GM10248 (cell line): ENCODE measurements at regions of chr19 and their contacts with region 1.

Region 1: DNA sequence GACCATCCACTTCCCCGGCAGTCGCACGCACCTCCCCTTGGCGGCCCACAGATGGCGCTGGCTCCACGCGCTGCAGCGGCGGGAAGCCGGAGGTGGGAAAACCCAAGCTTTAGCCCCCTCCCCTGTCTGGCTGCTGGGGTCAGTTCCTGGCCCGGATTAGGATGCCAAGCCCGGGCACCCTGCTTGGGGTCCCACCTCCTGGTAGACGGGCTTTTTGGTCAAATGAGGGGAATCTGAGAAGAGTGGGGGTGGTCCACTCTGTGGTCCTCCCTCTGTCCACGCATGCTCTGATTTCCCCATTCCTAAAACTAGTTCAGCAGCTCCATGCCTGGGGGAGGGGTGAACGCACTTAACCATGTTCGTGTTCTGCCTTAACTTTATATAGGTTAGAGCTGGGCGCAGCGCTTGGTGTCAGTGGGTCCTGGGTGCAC is 8.1 kb upstream of the ADGRE2 start:
- DNase-seq: peak; percentile 62
- CTCF ChIP-seq: peak; percentile 82

Region 2: GRCh38 chr19:14425696-14426138 is 360.7 kb before region 1 on chr19:
- CTCF ChIA-PET with region 1: no interaction called
- POLR2A ChIA-PET with region 1: no interaction called
- DNase-seq: no peak
- CTCF ChIP-seq: no peak

Region 3: DNA sequence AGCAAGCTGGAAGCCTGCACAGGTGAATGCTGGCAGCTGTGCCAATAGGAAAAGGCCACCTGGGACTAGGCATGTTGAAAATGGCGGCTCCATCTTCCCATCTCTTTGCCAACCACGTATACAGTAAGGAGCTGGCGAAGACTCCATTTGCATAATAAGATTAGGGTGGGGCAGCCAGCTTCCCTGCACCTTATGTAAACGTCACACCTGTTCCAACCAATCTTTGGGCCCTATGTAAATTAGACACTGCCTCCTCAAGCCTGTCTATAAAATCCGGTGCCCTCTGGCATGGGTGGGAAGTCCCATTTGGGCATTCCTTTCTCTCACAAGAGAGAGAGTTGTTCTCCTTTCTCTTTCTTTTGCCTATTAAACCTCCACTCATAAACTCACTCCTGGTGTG is 24.8 kb before region 1 on chr19:
- CTCF ChIA-PET with region 1: no interaction called
- POLR2A ChIA-PET with region 1: no interaction called
- DNase-seq: no peak
- CTCF ChIP-seq: no peak

Region 4: GRCh38 chr19:14775869-14776586 is 10.4 kb before region 1 on chr19:
- CTCF ChIA-PET with region 1: interaction called, 19 read pairs
- POLR2A ChIA-PET with region 1: no interaction called
- DNase-seq: peak; percentile 40
- CTCF ChIP-seq: no peak